ENCODE measurements at regions of chr12 and their contacts with region 1.

Region 1: DNA sequence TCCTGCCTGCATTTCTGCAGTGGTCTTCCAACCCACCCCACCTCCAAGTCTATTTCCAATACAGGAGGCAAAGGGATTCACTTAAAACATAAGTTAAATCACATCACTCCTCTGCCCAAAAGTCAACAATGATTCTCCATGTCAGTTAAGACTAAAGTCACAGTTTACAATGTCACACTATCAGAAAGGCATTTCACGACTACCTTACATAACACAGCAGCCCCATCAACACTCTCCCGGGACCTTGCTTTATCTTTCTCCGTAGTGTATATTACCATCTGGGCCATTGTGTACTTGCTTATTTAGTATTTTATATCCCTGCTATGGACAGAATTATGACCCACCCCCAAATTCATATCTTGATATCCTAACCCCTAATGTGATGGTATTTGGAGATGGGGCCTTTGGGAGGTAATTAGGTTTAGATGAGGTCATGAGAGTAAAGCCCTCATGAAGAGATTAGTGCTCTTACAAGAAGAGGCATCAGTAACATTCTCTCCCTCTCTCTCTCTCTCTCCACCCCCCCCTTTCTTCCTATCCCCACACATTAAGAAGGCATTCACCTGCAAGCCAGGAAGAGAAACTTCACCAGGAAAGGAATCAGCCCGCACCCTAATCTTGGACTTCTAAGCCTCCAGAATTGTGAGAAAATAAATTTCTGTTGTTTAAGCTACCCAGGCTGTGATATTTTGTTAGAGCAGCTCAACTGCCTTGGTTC is 112.7 kb downstream of the GXYLT1 start:
- DNase-seq: no peak
- ATAC-seq: no peak
- H3K4me3 ChIP-seq: no peak overlapping the region
- H3K4me3 Mint-ChIP-seq: no peak overlapping the region
- H3K27ac ChIP-seq: no peak overlapping the region
- H3K27ac Mint-ChIP-seq: no peak overlapping the region
- H3K4me1 ChIP-seq: no peaks in the 10 kb centered on the region
- H3K4me1 Mint-ChIP-seq: no peaks in the 10 kb centered on the region
- H3K27me3 ChIP-seq: no peaks in the 10 kb centered on the region
- H3K27me3 Mint-ChIP-seq: peaks cover 9 to 10% of the 10 kb centered on the region in 2 donors

Region 2: DNA sequence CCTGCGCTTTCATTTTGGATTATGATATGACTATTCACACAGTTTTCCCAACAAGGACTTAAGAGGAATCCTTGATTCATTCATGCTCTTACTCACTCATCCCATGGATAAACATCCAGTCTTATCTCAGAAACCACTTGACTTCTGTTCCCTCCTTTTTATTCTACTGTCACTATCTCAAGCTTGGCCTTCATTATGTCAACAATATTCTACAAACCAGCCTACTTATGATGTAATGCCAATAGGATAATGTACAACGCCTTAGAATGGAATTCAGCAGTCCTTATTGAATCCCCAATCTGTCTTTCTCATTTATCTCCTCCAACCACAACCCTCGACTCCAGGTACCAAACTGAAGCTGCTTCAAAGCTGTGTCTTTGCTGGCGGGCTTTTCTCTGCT is 395.4 kb before region 1 on chr12:
- CTCF ChIA-PET with region 1: no interaction called
- POLR2A ChIA-PET with region 1: no interaction called
- DNase-seq: no peak
- ATAC-seq: no peak
- H3K4me3 ChIP-seq: no peak overlapping the region
- H3K4me3 Mint-ChIP-seq: no peak overlapping the region
- H3K27ac ChIP-seq: no peak overlapping the region
- H3K27ac Mint-ChIP-seq: no peak overlapping the region
- H3K4me1 ChIP-seq: no peaks in the 10 kb centered on the region
- H3K4me1 Mint-ChIP-seq: no peaks in the 10 kb centered on the region
- H3K27me3 ChIP-seq: no peaks in the 10 kb centered on the region
- H3K27me3 Mint-ChIP-seq: no peaks in the 10 kb centered on the region

Region 3: GRCh38 chr12:43869184-43869583 is 1837.2 kb after region 1 on chr12:
- CTCF ChIA-PET with region 1: interaction called in 1 of 2 experiments, 10 read pairs
- POLR2A ChIA-PET with region 1: no interaction called
- DNase-seq: no peak
- ATAC-seq: no peak
- H3K4me3 ChIP-seq: no peak overlapping the region
- H3K4me3 Mint-ChIP-seq: no peak overlapping the region
- H3K27ac ChIP-seq: no peak overlapping the region
- H3K27ac Mint-ChIP-seq: no peak overlapping the region
- H3K4me1 ChIP-seq: no peaks in the 10 kb centered on the region
- H3K4me1 Mint-ChIP-seq: no peaks in the 10 kb centered on the region
- H3K27me3 ChIP-seq: no peaks in the 10 kb centered on the region
- H3K27me3 Mint-ChIP-seq: no peaks in the 10 kb centered on the region